ENCODE measurements at regions of chr1 and their contacts with region 1.

Region 1: DNA sequence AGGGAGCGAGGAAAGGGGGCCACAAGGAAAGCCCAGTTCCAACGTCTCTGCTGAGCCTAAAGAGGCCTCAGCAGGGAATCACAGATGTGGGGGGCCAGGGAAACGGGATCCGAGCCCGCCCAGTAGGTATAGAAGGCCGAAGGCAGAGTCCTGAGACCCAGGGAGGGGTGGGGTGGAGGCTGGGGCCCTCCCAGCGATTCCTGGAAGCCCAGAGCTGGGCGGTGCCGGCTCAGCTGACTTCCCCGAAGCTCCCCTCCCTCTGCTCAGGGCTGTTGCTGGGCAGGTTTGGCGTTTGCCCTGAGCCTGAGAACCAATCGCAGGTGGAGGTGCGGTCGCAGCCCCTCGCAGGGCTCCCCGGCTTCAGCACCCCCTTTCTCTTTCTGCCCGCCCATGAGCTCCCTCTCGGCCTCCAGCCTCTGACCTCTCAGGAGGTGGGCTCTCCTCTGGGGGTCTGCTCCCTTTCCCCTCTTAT is 12.8 kb downstream of the ADAMTSL4 start:
- DNase-seq: peak; percentile 94 to 95
- ATAC-seq: peak; percentile 80 to 91 (median 88)
- H3K4me3 ChIP-seq: peak overlapping the region; percentile 43 to 64 (median 58)
- H3K27ac ChIP-seq: peak overlapping the region; percentile 91 to 100 (median 100)
- H3K4me1 ChIP-seq: peaks cover 50 to 88% (median 78%) of the 10 kb centered on the region in 9 donors
- H3K27me3 ChIP-seq: no peaks in the 10 kb centered on the region
- CTCF ChIP-seq: no peak

Region 2: DNA sequence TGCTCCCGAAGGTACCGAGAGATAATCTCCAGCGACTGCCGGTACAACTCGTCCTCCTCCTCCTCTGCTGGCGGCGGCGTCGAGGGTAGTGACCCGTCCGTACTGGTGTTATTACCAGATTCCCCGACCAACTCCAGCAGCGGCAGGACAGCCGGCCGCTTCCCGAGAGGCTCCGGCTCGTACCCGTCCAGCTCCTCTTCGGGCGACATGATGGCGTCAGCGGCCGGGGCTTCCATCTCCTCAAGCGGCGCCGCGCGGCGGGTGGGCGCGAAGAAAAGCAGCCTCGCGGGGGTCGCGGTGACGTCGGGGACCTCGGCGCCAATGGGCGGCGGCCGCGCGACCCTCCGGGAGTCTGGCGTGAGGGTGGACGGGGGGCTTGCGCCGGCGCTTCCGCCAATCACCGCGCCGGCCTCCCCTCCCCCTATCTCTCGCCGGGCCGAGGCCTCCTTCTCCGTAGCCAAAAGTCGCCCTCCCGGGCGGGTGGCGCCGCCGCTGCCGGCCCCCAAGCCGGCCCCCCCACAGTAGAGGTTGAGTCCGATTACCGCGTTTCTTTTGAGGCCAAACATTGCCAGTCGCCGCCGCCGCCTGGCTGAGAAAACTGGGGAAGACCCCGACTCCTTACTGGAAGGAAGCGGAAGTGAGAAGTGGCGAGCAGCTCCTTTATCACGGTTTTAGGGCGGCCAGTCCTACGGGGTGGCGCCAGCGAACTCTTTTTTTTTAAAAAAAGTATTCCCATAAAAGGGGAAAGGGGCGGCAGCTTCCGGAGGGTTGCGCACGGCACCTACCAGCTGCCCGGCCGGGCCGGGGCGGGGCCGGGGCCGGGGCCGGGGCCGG is 17.2 kb after region 1 on chr1 and contains the start of gene MCL1:
- intact Hi-C with region 1: loop called in 7 of 10 experiments (anchors 1 to 2 kb)
- DNase-seq: peak; percentile 93 to 96
- ATAC-seq: peak; percentile 87 to 95 (median 90)
- H3K4me3 ChIP-seq: peak within 1 kb of the TSS; percentile 82 to 99 (median 96)
- H3K27ac ChIP-seq: peak within 1 kb of the TSS; percentile 91 to 100 (median 100)
- H3K4me1 ChIP-seq: peaks cover 0 to 46% (median 30%) of the 10 kb centered on the region in 9 donors
- H3K27me3 ChIP-seq: no peaks in the 10 kb centered on the region
- CTCF ChIP-seq: peak in 2 of 9 donors; percentile 16 to 19
- total RNA-seq, gene MCL1: 76.4 to 155 (median 122) TPM

Region 3: GRCh38 chr1:150621497-150622302 is 59.7 kb after region 1 on chr1:
- intact Hi-C with region 1: loop called (anchors 1 to 5 kb)
- DNase-seq: peak in 1 of 2 donors; percentile 57
- ATAC-seq: peak in 4 of 8 donors; percentile 27 to 53 (median 38)
- H3K4me3 ChIP-seq: no peak overlapping the region
- H3K27ac ChIP-seq: peak overlapping the region; percentile 32 to 87 (median 76)
- H3K4me1 ChIP-seq: peaks cover 8 to 57% (median 49%) of the 10 kb centered on the region in 9 donors
- H3K27me3 ChIP-seq: no peaks in the 10 kb centered on the region
- CTCF ChIP-seq: peak; percentile 51 to 80 (median 71)

Region 4: DNA sequence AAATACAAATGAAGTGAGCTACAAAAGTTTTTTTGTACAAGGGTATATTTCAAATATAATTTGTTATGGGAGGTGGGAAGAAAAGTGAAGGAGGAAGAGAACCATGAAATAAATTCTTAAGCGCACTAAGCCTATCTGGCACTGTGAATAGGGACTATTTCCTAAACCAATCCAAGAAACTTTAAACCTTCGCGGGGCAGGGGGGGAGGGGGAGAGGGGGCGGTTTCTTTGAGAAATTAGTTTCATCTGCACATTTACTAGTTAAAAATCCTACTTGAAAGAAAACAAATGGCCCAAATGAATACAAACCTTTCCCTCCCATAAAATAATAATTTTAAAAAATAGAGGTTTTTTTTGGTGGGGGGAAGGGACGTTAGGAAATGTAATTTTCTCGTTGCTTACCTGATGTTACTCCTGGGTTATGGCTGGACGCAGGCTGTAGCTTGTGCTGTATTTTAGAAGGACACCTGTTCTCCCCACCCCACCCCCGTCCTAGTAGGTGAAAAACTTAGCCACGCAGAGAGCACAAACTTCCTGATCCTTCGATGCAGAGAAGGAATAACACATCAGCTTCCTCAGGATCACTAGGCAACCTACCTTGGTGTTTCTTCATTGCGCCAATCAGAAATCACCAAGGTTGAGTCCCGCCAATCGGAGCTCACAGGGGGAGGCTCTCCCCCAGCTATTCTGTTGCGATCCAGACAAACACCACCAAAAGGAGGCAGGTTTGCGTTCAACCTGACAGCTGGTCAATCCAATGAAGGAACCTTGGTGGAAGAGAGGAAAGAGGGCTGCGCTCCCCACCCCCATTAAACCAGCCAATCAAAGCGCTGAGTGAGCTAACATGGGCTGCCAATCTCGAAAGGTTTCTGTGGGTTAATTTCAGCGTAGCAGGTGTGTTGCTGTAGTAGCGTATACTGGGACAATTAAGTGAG is 134.8 kb after region 1 on chr1 and contains the start of gene GOLPH3L:
- intact Hi-C with region 1: loop called in 2 of 10 experiments (anchors 5 to 10 kb)
- DNase-seq: peak; percentile 80 to 97
- ATAC-seq: peak; percentile 100
- H3K4me3 ChIP-seq: peak within 1 kb of the TSS; percentile 48 to 79 (median 72)
- H3K27ac ChIP-seq: peak within 1 kb of the TSS in 9 of 10 donors; percentile 26 to 76 (median 68)
- H3K4me1 ChIP-seq: peaks cover 0 to 26% (median 17%) of the 10 kb centered on the region in 9 donors
- H3K27me3 ChIP-seq: no peaks in the 10 kb centered on the region
- CTCF ChIP-seq: peak in 5 of 9 donors; percentile 11 to 55 (median 22)
- total RNA-seq, gene GOLPH3L: 10.9 to 17.8 (median 15.4) TPM

Region 5: GRCh38 chr1:150813058-150813707 is 251.2 kb after region 1 on chr1:
- intact Hi-C with region 1: loop called in 5 of 10 experiments (anchors 10 kb)
- DNase-seq: peak; percentile 45
- ATAC-seq: peak in 6 of 8 donors; percentile 65 to 85 (median 72)
- H3K4me3 ChIP-seq: no peak overlapping the region
- H3K27ac ChIP-seq: no peak overlapping the region
- H3K4me1 ChIP-seq: peaks cover 0 to 11% (median 0%) of the 10 kb centered on the region in 9 donors
- H3K27me3 ChIP-seq: no peaks in the 10 kb centered on the region
- CTCF ChIP-seq: peak; percentile 25 to 74 (median 58)